ENCODE measurements at regions of chr22 and their contacts with region 1.

Region 1: DNA sequence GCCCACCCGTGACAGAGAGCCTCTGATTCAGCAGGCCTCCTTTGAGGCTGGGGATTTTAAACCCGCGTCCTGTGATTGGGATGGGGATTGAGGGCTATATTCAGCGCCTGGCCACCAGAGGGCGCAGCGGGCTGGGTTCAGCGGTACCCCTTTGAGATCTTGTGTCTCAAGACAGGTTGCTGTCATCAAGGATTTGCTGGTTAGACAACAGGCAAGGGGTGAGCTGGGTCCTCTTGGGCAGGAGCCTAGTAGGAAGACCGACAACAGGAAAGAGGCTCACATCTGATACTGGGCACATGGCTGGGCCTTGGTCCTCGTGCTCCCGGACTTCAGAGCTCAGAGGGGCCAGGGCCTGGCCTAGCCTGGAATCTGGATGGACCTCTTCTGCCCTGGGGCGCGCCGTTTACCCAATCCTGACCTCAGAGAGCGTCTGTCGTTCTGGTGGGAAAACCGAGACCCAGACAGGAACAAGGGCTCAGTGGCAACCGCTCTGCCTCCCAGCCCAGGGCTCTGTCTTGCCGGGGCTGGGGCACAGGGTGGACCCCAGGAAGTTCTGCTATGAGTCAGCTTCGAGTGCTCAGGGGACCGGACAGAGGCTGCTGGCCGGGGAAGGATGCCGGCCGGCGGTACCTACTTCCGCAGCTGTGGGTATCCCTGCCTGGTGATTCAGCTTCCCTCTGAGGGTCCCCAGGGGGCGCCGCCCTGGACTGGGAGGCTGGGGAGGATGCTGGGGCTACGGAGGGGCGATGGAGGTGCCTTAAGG is 929 bp upstream of the SLC35E4 start:
- DNase-seq: peak; percentile 65 to 96
- H3K4me3 ChIP-seq: peak overlapping the region; percentile 34 to 71 (median 44); a peak in 7 of 8 replicates
- H3K27ac ChIP-seq: no peak overlapping the region
- H3K4me1 ChIP-seq: peaks cover 0 to 22% (median 14%) of the 10 kb centered on the region in 4 experiments; a peak in 6 of 7 replicates
- H3K27me3 ChIP-seq: peaks cover 0 to 4% (median 0%) of the 10 kb centered on the region in 4 experiments; a peak in 2 of 7 replicates
- CTCF ChIP-seq: peak; percentile 92 to 98 (median 96)
- EP300 ChIP-seq: no peak
- POLR2A ChIP-seq: no peak
- RAD21 ChIP-seq: peak; percentile 87 to 91

Region 2: DNA sequence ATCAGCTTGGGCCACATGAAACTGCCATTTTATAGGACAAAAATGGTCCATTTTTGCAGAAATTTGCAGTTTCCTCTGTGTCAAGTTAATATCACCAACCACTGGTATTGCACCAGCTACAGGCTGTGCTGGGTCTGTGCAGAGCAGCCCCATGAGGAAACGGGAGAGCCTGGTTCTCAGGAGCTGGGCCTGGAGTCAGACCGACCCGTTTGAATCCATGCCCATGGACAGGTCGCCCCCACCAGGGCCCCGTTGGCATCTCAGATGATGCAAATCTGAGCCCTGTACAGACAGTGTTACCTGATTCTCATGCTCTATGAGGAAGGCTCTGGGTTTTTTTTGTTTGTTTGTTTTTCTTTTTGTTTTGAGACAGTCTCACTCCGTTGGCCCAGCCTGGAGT is 78.3 kb before region 1 on chr22:
- CTCF ChIA-PET with region 1: interaction called, 17 read pairs
- POLR2A ChIA-PET with region 1: interaction called, 3 read pairs
- DNase-seq: no peak
- H3K4me3 ChIP-seq: no peak overlapping the region
- H3K27ac ChIP-seq: no peak overlapping the region
- H3K4me1 ChIP-seq: peaks cover 0 to 11% (median 4%) of the 10 kb centered on the region in 4 experiments; a peak in 5 of 7 replicates
- H3K27me3 ChIP-seq: no peaks in the 10 kb centered on the region
- CTCF ChIP-seq: peak; percentile 34 to 47 (median 37)
- EP300 ChIP-seq: no peak
- POLR2A ChIP-seq: no peak
- RAD21 ChIP-seq: peak; percentile 50 to 63

Region 3: DNA sequence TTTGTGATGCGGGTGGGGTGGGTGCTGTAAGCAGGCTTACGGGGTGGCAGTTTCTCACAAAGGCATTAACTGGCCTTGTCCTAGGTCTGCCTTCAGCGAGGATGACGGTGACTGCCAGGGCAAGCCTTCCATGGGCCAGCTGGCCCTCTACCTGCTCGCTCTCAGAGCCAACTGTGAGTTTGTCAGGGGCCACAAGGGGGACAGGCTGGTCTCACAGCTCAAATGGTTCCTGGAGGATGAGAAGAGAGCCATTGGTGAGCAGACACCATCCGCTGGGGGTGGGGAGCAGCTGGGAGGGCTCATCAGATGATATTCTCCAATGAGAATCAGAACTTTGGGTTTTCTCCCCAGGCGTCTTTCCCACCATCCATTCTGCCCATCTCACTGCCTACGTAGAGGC is 21.9 kb before region 1 on chr22:
- CTCF ChIA-PET with region 1: interaction called, 47 read pairs
- POLR2A ChIA-PET with region 1: interaction called, 5 read pairs
- DNase-seq: no peak
- H3K4me3 ChIP-seq: no peak overlapping the region
- H3K27ac ChIP-seq: no peak overlapping the region
- H3K4me1 ChIP-seq: peaks cover 0 to 16% (median 5%) of the 10 kb centered on the region in 4 experiments; a peak in 5 of 7 replicates
- H3K27me3 ChIP-seq: no peaks in the 10 kb centered on the region
- CTCF ChIP-seq: peak; percentile 37 to 44 (median 40); a peak in 3 of 4 replicates
- EP300 ChIP-seq: no peak
- POLR2A ChIP-seq: no peak
- RAD21 ChIP-seq: peak in 1 of 2 experiments; percentile 39; a peak in 2 of 4 replicates

Region 4: DNA sequence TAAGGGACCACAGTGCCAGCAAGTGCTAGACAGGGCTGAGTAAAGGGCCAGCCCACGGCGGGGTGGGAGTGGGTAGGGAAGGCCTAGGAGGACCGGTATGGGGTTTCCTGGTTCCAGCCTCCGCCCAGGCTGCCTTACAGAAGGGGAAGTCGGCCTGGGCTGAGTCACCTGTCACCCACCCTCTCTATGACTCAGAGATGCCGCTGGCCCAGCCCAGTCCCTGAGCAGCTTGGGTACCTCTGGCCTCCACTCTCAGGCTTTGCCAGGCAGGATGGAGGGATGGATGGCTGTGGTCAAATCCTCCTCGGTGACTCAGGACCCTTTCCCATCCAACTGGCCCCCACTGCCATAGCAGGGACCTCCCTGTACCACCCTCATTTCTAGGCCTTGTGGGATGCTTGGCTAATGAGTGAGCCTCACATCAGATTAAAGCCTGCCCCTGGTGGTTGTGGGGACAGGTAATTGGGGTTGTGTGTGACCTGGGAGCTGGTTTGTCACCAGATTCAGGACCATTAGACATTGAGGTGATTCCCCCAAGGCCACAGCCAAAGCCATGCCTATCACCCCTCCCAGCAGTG is 14.9 kb after region 1 on chr22:
- CTCF ChIA-PET with region 1: interaction called, 74 read pairs
- POLR2A ChIA-PET with region 1: interaction called, 7 read pairs
- DNase-seq: no peak
- H3K4me3 ChIP-seq: no peak overlapping the region
- H3K27ac ChIP-seq: no peak overlapping the region
- H3K4me1 ChIP-seq: peaks cover 0 to 4% (median 0%) of the 10 kb centered on the region in 4 experiments; a peak in 2 of 7 replicates
- H3K27me3 ChIP-seq: no peaks in the 10 kb centered on the region
- CTCF ChIP-seq: peak in 1 of 3 experiments; percentile 2; a peak in 1 of 4 replicates
- EP300 ChIP-seq: no peak
- POLR2A ChIP-seq: no peak
- RAD21 ChIP-seq: no peak

Region 5: DNA sequence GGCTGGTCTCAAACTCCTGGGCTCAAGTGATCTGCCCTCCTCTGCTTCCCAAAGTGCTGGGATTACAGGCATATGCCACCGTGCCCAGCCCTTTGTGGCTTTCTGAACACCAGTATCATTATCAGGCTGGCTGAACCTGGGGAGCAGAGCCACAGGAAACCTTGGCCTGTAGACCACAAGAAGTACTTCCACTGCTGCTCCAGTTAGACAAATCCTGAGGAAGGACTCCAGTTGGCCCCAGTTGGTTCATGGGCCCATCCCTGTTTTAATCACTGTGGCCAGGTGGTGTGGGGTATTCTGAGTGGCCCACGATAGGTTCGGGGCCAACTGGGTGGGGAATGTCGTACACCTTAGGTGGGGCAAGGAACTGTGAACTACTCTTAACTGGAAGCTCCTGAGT is 38.5 kb after region 1 on chr22:
- CTCF ChIA-PET with region 1: interaction called, 26 read pairs
- POLR2A ChIA-PET with region 1: interaction called, 3 read pairs
- DNase-seq: no peak
- H3K4me3 ChIP-seq: no peak overlapping the region
- H3K27ac ChIP-seq: no peak overlapping the region
- H3K4me1 ChIP-seq: peaks cover 0 to 1% (median 0%) of the 10 kb centered on the region in 4 experiments; a peak in 3 of 7 replicates
- H3K27me3 ChIP-seq: peaks cover 0 to 12% (median 8%) of the 10 kb centered on the region in 4 experiments; a peak in 5 of 7 replicates
- CTCF ChIP-seq: no peak
- EP300 ChIP-seq: no peak
- POLR2A ChIP-seq: no peak
- RAD21 ChIP-seq: no peak

Region 6: GRCh38 chr22:30742291-30743256 is 107.9 kb after region 1 on chr22:
- CTCF ChIA-PET with region 1: interaction called, 21 read pairs
- POLR2A ChIA-PET with region 1: no interaction called
- DNase-seq: no peak
- H3K4me3 ChIP-seq: no peak overlapping the region
- H3K27ac ChIP-seq: no peak overlapping the region
- H3K4me1 ChIP-seq: peaks cover 0 to 12% (median 3%) of the 10 kb centered on the region in 4 experiments; a peak in 4 of 7 replicates
- H3K27me3 ChIP-seq: no peaks in the 10 kb centered on the region
- CTCF ChIP-seq: no peak
- EP300 ChIP-seq: no peak
- POLR2A ChIP-seq: no peak
- RAD21 ChIP-seq: no peak

Region 7: GRCh38 chr22:30782613-30783012 is 148.0 kb after region 1 on chr22:
- CTCF ChIA-PET with region 1: no interaction called
- POLR2A ChIA-PET with region 1: no interaction called
- DNase-seq: no peak
- H3K4me3 ChIP-seq: no peak overlapping the region
- H3K27ac ChIP-seq: no peak overlapping the region
- H3K4me1 ChIP-seq: no peaks in the 10 kb centered on the region
- H3K27me3 ChIP-seq: no peaks in the 10 kb centered on the region
- CTCF ChIP-seq: no peak
- EP300 ChIP-seq: no peak
- POLR2A ChIP-seq: no peak
- RAD21 ChIP-seq: no peak

Region 8: DNA sequence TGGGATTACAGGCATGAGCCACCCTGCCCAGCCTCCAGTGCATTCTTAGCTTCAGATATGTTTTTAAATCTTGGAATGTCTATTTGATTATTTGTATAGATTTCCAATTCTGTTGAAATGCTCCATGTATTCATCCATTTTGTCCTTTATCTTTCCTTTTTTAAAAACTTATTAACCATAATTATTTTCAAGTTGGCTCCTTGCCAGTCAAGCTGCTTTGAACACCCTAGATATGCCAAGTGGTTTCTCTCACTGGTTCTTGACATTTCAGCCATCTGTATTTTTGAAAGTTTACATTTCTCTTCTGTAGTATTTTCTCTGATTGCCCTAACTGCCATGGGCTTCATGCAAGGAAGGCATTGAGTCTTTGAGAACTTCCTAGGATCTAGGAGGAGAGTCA is 161.1 kb after region 1 on chr22:
- CTCF ChIA-PET with region 1: no interaction called
- POLR2A ChIA-PET with region 1: no interaction called
- DNase-seq: no peak
- H3K4me3 ChIP-seq: no peak overlapping the region
- H3K27ac ChIP-seq: no peak overlapping the region
- H3K4me1 ChIP-seq: no peaks in the 10 kb centered on the region
- H3K27me3 ChIP-seq: peaks cover 1 to 3% (median 2%) of the 10 kb centered on the region in 4 experiments; a peak in 3 of 7 replicates
- CTCF ChIP-seq: no peak
- EP300 ChIP-seq: no peak
- POLR2A ChIP-seq: no peak
- RAD21 ChIP-seq: no peak